Dorsolateral prefrontal cortex (tissue), 120 donors: ENCODE measurements at regions of chr10 and their contacts with region 1.

Region 1: GRCh38 chr10:84328418-84329195 is at the start of gene CCSER2:
- DNase-seq: peak; percentile 87 to 99 (median 94)
- H3K4me3 ChIP-seq: peak within 1 kb of the TSS; percentile 62 to 99 (median 86)
- H3K27ac ChIP-seq: peak within 1 kb of the TSS; percentile 62 to 98 (median 92)
- H3K27me3 ChIP-seq: no peaks in the 10 kb centered on the region
- CTCF ChIP-seq: peak in 20 of 56 donors; percentile 1 to 48 (median 26)
- total RNA-seq, gene CCSER2: 103 to 206 (median 150) TPM

Region 2: DNA sequence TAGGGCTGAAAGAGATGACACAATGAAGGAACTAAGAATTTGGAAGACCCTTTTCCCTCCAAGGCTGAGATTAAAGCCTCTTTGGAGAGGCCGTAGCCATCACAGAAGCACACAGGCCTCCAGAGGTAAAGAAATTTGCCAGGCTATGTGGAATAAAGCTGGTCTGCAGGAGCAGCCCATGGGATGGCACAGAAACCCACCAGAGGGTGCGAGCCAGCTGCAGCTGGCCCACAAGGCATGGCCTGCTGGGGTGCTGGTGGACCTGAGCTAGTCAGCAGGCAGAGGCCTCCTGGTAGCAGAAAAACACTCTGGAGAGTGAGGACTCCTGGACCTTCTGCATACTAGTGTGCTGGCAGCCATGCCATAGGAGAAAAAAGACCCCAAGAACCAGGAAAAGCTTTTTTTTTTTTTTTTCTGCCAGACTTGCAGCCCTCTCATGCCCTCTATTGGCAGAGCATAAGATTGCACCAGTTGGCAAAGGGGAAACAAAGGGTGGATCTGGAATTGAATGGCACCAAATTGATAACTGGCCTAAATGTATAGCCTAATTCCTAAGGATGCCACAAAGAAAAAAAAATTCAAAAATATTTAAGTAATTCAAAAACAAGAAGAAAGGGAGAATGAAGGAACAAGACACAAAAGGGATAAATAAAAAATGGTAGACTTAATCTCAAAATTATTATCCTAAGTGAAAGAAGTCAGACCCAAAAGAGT is 301.9 kb before region 1 on chr10:
- intact Hi-C with region 1: no loop called
- DNase-seq: no peak
- H3K4me3 ChIP-seq: no peak overlapping the region
- H3K27ac ChIP-seq: no peak overlapping the region
- H3K27me3 ChIP-seq: no peaks in the 10 kb centered on the region
- CTCF ChIP-seq: peak in 54 of 56 donors; percentile 14 to 64 (median 46)

Region 3: DNA sequence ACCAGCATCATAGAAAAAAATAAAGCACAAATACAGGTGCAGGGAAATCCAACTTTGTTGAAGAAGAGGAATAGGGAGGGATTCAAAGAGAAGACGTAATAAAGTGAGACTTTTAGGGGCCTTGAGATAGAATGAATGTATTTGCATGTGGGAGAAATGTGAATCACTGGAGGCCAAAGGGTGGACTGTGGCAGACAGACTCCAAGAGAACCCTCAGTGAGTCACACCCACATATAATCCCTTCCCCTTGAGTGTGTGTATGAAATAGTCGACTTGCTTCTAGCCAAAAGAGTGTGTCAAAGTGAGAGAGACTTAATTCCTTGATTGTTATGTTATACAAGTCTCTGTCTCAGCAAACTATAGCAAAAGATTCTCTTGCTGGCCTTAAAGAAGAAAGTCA is 290.6 kb before region 1 on chr10:
- intact Hi-C with region 1: no loop called
- DNase-seq: no peak
- H3K4me3 ChIP-seq: no peak overlapping the region
- H3K27ac ChIP-seq: no peak overlapping the region
- H3K27me3 ChIP-seq: no peaks in the 10 kb centered on the region
- CTCF ChIP-seq: no peak

Region 4: GRCh38 chr10:84139126-84140035 is 189.2 kb before region 1 on chr10 and contains the start of gene GHITM:
- intact Hi-C with region 1: loop called in 1 of 2 experiments (anchors 5 kb)
- DNase-seq: peak; percentile 97 to 99 (median 99)
- H3K4me3 ChIP-seq: peak within 1 kb of the TSS; percentile 73 to 100 (median 99)
- H3K27ac ChIP-seq: peak within 1 kb of the TSS; percentile 55 to 99 (median 93)
- H3K27me3 ChIP-seq: no peaks in the 10 kb centered on the region
- CTCF ChIP-seq: peak in 50 of 56 donors; percentile 15 to 64 (median 48)
- total RNA-seq, gene GHITM: 112 to 296 (median 226) TPM

Region 5: GRCh38 chr10:84288151-84288550 is 40.5 kb before region 1 on chr10:
- intact Hi-C with region 1: no loop called
- DNase-seq: no peak
- H3K4me3 ChIP-seq: no peak overlapping the region
- H3K27ac ChIP-seq: no peak overlapping the region
- H3K27me3 ChIP-seq: no peaks in the 10 kb centered on the region
- CTCF ChIP-seq: no peak

Region 6: GRCh38 chr10:84375011-84375410 is 46.4 kb after region 1 on chr10:
- intact Hi-C with region 1: no loop called
- DNase-seq: peak in 2 of 10 donors; percentile 25 to 43
- H3K4me3 ChIP-seq: no peak overlapping the region
- H3K27ac ChIP-seq: peak overlapping the region in 2 of 59 donors; percentile 5 to 31
- H3K27me3 ChIP-seq: no peaks in the 10 kb centered on the region
- CTCF ChIP-seq: peak; percentile 56 to 94 (median 78)